Activated CD4-positive, alpha-beta memory T cell treated with anti-CD3 and anti-CD28 coated beads, Interleukin-2, amount 10 ng/mL, durations not matched to agents 7 days and 5 days (primary cell): ENCODE measurements at regions of chr1 and their contacts with region 1.

Region 1: DNA sequence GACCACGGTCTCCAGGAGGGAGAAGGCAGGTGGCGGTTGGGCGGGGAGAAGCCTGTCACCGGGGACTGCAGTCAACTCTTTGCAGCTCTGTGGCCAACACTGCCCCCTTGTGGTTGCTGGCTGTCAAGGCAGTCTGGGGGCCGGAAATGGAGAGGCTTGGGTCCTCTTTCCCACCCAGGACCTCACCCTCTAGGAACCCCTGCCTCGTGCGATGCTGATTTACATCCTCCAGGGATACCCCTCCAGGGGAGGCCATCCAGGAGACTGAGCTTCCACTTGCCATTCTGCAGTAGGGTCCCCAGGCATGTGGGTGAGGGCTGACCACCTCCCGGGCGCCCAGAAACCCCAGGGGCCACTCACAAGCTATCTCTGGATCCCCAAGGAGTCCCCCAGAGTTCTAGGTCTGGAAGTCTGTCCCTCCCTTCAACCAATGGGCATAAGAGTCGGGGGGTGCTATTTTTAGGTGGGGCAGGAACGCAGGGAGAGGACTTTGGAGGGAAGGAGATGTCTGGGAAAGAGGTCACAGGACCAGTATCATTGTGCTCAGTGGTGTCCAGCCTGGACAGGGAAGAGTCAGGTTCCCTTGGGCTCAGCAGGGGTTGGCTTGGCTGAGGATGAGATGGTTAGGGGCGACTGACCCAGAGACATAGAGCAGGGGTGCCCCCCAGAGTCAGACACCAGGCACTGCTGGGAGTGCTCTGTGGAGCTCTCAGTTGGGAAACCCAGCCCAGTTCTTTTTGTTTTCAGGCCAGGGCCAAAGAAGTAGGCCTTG is 7.1 kb upstream of the GPR61 start:
- DNase-seq: peak; percentile 92
- H3K4me3 Mint-ChIP-seq: peak overlapping the region; percentile 48
- H3K27ac Mint-ChIP-seq: peak overlapping the region; percentile 90
- H3K4me1 Mint-ChIP-seq: peaks cover 22% of the 10 kb centered on the region
- H3K27me3 Mint-ChIP-seq: no peaks in the 10 kb centered on the region

Region 2: GRCh38 chr1:109277434-109278204 is 254.9 kb before region 1 on chr1:
- CTCF ChIA-PET with region 1: interaction called, 57 read pairs
- POLR2A ChIA-PET with region 1: interaction called, 5 read pairs
- DNase-seq: peak; percentile 77
- H3K4me3 Mint-ChIP-seq: no peak overlapping the region
- H3K27ac Mint-ChIP-seq: peak overlapping the region; percentile 24
- H3K4me1 Mint-ChIP-seq: peaks cover 37% of the 10 kb centered on the region
- H3K27me3 Mint-ChIP-seq: no peaks in the 10 kb centered on the region

Region 3: GRCh38 chr1:109397538-109398342 is 134.8 kb before region 1 on chr1 and contains the start of gene SORT1:
- CTCF ChIA-PET with region 1: interaction called, 35 read pairs
- POLR2A ChIA-PET with region 1: no interaction called
- DNase-seq: peak; percentile 55
- H3K4me3 Mint-ChIP-seq: peak within 1 kb of the TSS; percentile 72
- H3K27ac Mint-ChIP-seq: no peak within 1 kb of the TSS
- H3K4me1 Mint-ChIP-seq: peaks cover 14% of the 10 kb centered on the region
- H3K27me3 Mint-ChIP-seq: peaks cover 43% of the 10 kb centered on the region
- total RNA-seq, gene SORT1: 3.2 to 4.5 TPM

Region 4: GRCh38 chr1:109454497-109455133 is 77.9 kb before region 1 on chr1:
- CTCF ChIA-PET with region 1: no interaction called
- POLR2A ChIA-PET with region 1: no interaction called
- DNase-seq: no peak
- H3K4me3 Mint-ChIP-seq: no peak overlapping the region
- H3K27ac Mint-ChIP-seq: no peak overlapping the region
- H3K4me1 Mint-ChIP-seq: no peaks in the 10 kb centered on the region
- H3K27me3 Mint-ChIP-seq: peaks cover 52% of the 10 kb centered on the region

Region 5: GRCh38 chr1:109493805-109494539 is 38.6 kb before region 1 on chr1 and contains the start of gene CYB561D1:
- CTCF ChIA-PET with region 1: interaction called, 779 read pairs
- POLR2A ChIA-PET with region 1: interaction called, 54 read pairs
- DNase-seq: peak; percentile 91
- H3K4me3 Mint-ChIP-seq: peak within 1 kb of the TSS; percentile 96
- H3K27ac Mint-ChIP-seq: peak within 1 kb of the TSS; percentile 82
- H3K4me1 Mint-ChIP-seq: peaks cover 42% of the 10 kb centered on the region
- H3K27me3 Mint-ChIP-seq: no peaks in the 10 kb centered on the region
- total RNA-seq, gene CYB561D1: 19.5 to 21.4 TPM

Region 6: DNA sequence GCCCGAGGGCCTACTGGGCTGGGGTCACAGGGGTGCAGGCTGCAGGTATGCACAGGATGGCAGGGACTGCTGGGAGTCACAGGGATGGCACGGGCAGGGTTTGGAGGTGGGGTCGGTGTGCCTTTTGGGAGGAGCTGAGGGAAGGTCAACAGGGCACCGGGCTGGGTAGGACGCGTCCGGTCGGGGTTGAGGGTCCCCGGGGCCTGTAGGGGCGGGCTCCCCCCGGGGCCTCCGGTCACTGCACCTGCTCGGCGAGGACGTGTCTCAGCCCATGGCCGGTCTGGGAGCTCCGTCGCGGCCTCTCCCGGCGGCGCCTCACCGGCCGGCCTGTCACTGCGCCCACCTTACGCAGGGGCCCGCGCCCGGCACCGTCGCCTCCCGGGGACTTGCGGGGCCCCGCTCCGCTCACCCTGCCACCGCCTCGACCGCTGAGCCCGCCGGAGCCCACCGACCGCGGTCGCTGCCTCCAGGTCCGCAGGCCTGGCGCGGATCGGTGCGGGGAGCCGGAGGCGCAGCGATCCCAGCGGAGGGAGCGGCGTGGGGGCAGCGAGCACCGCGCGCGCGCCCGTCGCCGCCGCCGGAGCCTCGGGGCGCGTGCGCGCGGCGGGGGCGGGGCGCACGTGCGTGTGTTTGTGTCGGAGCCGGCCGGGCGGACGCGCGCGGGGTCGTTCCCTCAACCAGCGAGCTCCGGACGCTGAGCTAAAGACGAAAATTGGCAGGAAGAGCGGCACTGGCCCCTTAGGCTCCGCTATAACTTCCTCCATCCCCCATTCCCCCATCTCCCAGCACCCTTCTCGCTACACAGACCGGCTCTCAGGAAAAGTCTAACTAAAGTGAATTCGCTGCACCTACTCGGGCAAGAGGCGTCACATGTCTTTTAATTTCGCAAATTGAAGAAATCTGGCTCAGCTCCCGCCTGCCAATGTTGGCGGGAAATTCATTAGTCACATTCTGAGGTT is 23.1 kb before region 1 on chr1 and contains the start of gene AMIGO1:
- CTCF ChIA-PET with region 1: interaction called, 779 read pairs
- POLR2A ChIA-PET with region 1: interaction called, 12 read pairs
- DNase-seq: peak; percentile 51
- H3K4me3 Mint-ChIP-seq: peak within 1 kb of the TSS; percentile 77
- H3K27ac Mint-ChIP-seq: peak within 1 kb of the TSS; percentile 26
- H3K4me1 Mint-ChIP-seq: peaks cover 34% of the 10 kb centered on the region
- H3K27me3 Mint-ChIP-seq: peaks cover 31% of the 10 kb centered on the region
- total RNA-seq, gene AMIGO1: 1.2 to 1.3 TPM

Region 7: DNA sequence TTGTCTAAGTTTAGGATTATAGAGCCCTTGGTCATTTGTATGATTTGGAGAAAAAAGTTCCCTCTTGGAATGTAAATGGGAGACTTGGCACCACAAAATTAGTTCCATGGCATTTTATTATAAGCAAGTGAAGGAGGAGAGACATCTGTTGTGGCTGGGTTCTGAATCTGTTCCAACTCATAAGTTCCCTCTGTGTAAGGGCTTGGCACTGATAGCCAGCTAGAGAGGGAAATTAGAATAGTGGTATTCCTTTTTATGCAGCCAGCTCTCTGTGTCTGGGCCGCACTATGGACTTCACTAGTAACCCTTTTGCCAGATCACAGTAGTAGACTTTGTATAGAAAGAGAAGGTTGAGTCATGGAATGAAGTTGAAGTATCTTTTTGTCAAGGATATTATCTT is 46.9 kb after region 1 on chr1:
- CTCF ChIA-PET with region 1: no interaction called
- POLR2A ChIA-PET with region 1: no interaction called
- DNase-seq: no peak
- H3K4me3 Mint-ChIP-seq: no peak overlapping the region
- H3K27ac Mint-ChIP-seq: no peak overlapping the region
- H3K4me1 Mint-ChIP-seq: peaks cover 3% of the 10 kb centered on the region
- H3K27me3 Mint-ChIP-seq: no peaks in the 10 kb centered on the region

Region 8: GRCh38 chr1:109643385-109644230 is 111.1 kb after region 1 on chr1:
- CTCF ChIA-PET with region 1: interaction called, 20 read pairs
- POLR2A ChIA-PET with region 1: no interaction called
- DNase-seq: peak; percentile 88
- H3K4me3 Mint-ChIP-seq: no peak overlapping the region
- H3K27ac Mint-ChIP-seq: no peak overlapping the region
- H3K4me1 Mint-ChIP-seq: peaks cover 18% of the 10 kb centered on the region
- H3K27me3 Mint-ChIP-seq: peaks cover 7% of the 10 kb centered on the region